AG04450 (cell line): ENCODE measurements at regions of chr14 and their contacts with region 1.

Region 1: DNA sequence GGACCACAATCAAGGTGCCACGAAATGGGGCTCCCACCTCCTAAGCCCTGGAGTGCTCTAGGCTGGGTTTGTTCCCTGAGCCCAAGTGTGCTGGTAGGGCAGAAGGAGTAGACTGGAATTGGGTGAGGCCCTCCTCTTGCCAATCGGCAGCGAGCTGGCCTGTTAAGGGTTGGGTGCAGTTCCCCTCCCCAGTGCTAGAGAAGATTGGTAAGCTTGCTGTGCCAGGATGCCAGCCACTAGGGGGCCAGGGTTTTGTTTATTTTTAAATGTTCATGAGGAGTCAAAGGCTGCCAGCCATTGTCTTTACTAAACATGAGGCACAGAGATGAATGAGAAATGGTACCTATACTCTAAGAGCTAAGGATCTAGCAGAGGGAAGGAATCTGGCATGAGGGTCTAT is 79.7 kb downstream of the SPTB start:
- DNase-seq: no peak
- H3K4me3 ChIP-seq: no peak overlapping the region
- H3K27ac ChIP-seq: no peak overlapping the region
- H3K27me3 ChIP-seq: peaks cover 16% of the 10 kb centered on the region
- CTCF ChIP-seq: peak; percentile 48

Region 2: DNA sequence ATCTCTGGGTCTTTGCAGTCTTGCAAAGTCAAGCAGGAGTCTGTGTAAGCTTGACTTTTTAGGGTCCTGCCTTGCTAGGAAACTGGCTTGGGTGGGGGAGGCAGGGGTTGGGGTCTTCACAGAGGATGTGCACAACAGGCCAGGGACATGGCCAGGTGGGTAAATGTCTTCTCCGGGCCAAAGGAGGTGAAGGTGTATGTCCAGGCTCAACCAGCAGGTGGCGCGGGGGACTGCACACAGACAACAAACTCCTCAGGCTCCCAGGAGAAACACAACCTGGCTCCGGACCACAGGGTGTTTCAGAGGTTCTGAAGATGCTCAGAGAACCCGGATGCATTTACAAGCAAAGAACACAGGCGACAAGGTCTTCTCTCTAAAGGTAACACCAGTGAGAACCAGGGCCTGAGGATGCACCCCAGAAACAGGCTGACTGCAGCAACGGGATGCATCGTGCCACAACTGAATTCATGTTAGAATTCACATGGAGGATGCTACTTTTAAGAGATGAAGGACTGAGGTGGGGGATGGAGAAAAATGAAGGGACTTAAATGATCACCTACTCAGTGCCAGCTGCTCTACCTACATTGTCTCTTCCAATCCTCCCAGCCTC is 39.7 kb before region 1 on chr14:
- CTCF ChIA-PET with region 1: no interaction called
- POLR2A ChIA-PET with region 1: no interaction called
- DNase-seq: no peak
- H3K4me3 ChIP-seq: no peak overlapping the region
- H3K27ac ChIP-seq: no peak overlapping the region
- H3K27me3 ChIP-seq: peaks cover 2% of the 10 kb centered on the region
- CTCF ChIP-seq: peak; percentile 70

Region 3: GRCh38 chr14:64788668-64789067 is 11.3 kb before region 1 on chr14:
- CTCF ChIA-PET with region 1: interaction called, 13 read pairs
- POLR2A ChIA-PET with region 1: no interaction called
- DNase-seq: peak; percentile 70
- H3K4me3 ChIP-seq: no peak overlapping the region
- H3K27ac ChIP-seq: no peak overlapping the region
- H3K27me3 ChIP-seq: peaks cover 5% of the 10 kb centered on the region
- CTCF ChIP-seq: no peak